ENCODE measurements at regions of chr3 and their contacts with region 1.

Region 1: DNA sequence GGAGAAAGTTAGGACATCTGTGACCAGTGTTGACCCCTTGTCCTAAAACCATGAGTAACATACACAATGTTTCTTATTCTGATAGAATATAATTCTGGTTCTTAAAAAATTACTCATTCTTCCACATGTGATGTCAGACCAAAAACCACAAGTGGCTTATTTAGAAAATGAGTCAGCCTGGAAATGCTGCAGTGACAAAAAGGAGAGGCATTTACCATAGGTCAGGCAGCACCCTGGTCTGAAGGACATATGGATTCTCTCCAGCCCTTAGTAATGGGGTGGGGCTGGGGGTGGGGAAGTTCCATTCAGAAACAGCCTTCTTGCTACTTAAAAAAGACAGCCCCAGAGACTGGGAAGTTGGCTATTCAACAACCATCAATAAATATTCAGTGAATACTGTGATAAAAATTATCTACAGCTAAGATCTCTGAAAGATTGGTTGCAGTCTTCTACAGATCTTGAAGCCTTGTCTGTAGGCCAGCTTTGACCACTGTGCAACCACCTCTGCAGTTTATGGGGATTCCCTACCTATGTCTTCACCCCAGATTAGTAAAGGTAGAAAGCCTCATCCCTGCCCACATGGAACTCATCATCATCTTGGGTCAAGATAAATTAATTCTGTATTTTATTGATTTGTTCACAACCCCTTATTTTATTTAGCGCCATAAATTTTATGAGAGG is 34.9 kb upstream of the TIMP4 start:
- DNase-seq: peak; percentile 99
- ATAC-seq: peak; percentile 82
- H3K4me3 ChIP-seq: peak overlapping the region; percentile 47
- H3K27ac ChIP-seq: peak overlapping the region; percentile 97
- H3K4me1 ChIP-seq: peaks cover 57% of the 10 kb centered on the region
- H3K27me3 ChIP-seq: no peaks in the 10 kb centered on the region
- CTCF ChIP-seq: no peak

Region 2: DNA sequence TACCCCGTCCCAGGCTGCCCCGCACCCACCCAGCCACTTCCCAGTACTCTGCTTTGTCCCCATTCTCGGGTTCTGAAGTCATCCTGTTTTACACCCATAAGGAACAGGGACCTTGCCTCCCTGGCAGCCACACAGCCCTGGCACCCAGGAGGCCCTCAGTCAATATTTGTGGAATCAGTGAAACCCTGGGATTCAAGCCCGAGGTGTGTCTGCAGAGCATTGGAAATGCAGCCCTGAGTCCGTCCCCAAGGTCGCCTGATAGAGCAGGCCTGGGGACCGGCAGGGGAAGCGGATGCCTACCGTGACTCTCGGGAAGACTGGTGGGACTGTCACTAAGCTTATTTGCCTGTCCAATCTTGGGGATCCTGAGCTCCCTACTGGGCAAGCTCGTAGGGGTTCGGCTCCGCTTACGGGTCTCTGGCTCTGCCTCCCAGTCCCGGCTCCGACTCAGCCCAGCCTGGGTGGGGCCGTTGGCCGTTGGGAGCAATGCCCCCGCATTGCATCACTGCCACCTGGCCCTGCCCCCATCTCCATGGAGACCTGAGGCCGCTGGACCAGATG is 282.6 kb before region 1 on chr3:
- CTCF ChIA-PET with region 1: no interaction called
- POLR2A ChIA-PET with region 1: no interaction called
- intact Hi-C with region 1: no loop called
- DNase-seq: no peak
- ATAC-seq: no peak
- H3K4me3 ChIP-seq: no peak overlapping the region
- H3K27ac ChIP-seq: no peak overlapping the region
- H3K4me1 ChIP-seq: no peaks in the 10 kb centered on the region
- H3K27me3 ChIP-seq: peaks cover 73% of the 10 kb centered on the region
- CTCF ChIP-seq: no peak

Region 3: DNA sequence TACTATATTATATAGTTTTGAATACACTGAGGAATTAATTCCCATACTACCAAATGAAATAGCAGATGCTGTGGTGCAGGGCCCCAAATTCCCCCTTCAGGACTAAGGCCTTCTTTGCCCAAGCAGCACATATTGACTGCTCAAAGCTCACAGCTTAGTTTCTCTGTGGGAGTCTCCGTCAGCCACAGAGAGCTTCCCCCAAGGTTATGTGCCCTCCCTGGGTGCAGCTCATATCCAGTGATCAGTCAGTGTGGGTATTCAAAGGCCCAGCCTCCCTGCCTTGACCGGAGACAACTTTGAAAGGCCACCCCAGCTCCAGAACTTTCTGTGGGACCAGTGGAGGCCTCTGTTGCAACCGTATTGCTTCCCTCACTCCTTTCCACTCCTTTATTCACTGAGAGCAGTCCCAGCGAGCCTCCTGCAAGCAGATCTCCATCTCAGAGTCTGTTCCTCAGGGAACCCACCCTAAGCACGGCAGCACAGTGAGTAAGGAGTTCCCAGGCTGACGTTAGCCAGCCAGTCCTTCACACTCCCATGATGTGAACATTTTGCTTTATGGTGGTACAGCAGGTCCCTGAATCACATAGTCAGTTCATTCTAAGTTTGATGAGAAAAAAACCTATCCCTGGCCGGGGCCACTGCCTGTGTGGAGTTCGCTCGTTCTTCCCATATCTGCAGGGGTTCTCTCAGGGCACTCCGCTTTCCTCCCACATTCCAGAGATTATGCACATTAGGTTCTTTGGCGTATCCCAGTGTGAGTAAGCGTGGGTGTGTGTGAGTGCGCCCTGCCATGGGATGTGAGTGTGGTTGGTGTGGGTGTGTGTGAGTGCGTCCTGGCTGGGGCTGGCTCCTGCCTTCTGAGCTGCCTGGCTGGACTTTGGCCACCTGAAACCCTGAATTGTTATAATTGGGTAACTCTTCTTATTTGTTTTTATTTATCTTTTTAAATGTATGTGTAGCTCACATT is 30.8 kb after region 1 on chr3:
- CTCF ChIA-PET with region 1: interaction called, 4 read pairs
- POLR2A ChIA-PET with region 1: no interaction called
- intact Hi-C with region 1: loop called (anchors 1 kb)
- DNase-seq: peak; percentile 82
- ATAC-seq: peak; percentile 70
- H3K4me3 ChIP-seq: no peak overlapping the region
- H3K27ac ChIP-seq: peak overlapping the region; percentile 40
- H3K4me1 ChIP-seq: peaks cover 63% of the 10 kb centered on the region
- H3K27me3 ChIP-seq: no peaks in the 10 kb centered on the region
- CTCF ChIP-seq: no peak